CD4-positive, alpha-beta T cell (primary cell): ENCODE measurements at regions of chr18 and their contacts with region 1.

Region 1: GRCh38 chr18:5424903-5425664 is 118.7 kb downstream of the EPB41L3 start:
- DNase-seq: peak in 4 of 14 experiments; percentile 15 to 55 (median 38)
- ATAC-seq: peak; percentile 64
- H3K4me3 ChIP-seq: no peak overlapping the region
- H3K4me3 Mint-ChIP-seq: no peak overlapping the region
- H3K27ac ChIP-seq: no peak overlapping the region
- H3K27ac Mint-ChIP-seq: no peak overlapping the region
- H3K4me1 ChIP-seq: no peaks in the 10 kb centered on the region
- H3K4me1 Mint-ChIP-seq: peaks cover 6% of the 10 kb centered on the region
- H3K27me3 ChIP-seq: no peaks in the 10 kb centered on the region
- H3K27me3 Mint-ChIP-seq: no peaks in the 10 kb centered on the region
- CTCF ChIP-seq: peak; percentile 71

Region 2: GRCh38 chr18:5073026-5073944 is 351.8 kb before region 1 on chr18:
- CTCF ChIA-PET with region 1: no interaction called
- POLR2A ChIA-PET with region 1: no interaction called
- intact Hi-C with region 1: loop called in 1 of 2 experiments (anchors 10 kb)
- DNase-seq: peak in 8 of 14 experiments; percentile 3 to 66 (median 20)
- ATAC-seq: peak; percentile 85
- H3K4me3 ChIP-seq: no peak overlapping the region
- H3K4me3 Mint-ChIP-seq: no peak overlapping the region
- H3K27ac ChIP-seq: no peak overlapping the region
- H3K27ac Mint-ChIP-seq: no peak overlapping the region
- H3K4me1 ChIP-seq: no peaks in the 10 kb centered on the region
- H3K4me1 Mint-ChIP-seq: no peaks in the 10 kb centered on the region
- H3K27me3 ChIP-seq: no peaks in the 10 kb centered on the region
- H3K27me3 Mint-ChIP-seq: peaks cover 4% of the 10 kb centered on the region
- CTCF ChIP-seq: peak; percentile 80

Region 3: DNA sequence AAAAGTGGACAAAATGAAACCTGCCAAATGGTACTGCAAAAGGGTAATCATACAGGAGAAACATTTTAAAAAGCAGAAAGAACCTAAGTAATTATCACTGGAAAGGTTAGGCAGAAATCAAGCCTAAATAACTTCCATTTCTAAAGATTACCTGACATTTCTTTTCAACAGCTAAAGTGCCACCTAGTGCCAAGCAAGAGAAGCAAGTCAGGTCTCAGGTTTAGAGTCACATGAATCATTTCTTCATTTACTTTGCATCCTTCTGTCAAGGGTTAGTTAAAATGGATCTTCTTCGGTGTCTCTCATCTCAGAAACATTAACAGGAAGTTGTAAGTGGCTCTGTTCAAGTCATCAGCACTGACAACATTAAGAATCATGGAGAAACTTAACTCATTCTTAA is 318.4 kb before region 1 on chr18:
- CTCF ChIA-PET with region 1: no interaction called
- POLR2A ChIA-PET with region 1: no interaction called
- intact Hi-C with region 1: loop called in 1 of 2 experiments (anchors 10 kb)
- DNase-seq: peak in 3 of 14 experiments; percentile 3 to 17 (median 16)
- ATAC-seq: peak; percentile 94
- H3K4me3 ChIP-seq: no peak overlapping the region
- H3K4me3 Mint-ChIP-seq: no peak overlapping the region
- H3K27ac ChIP-seq: no peak overlapping the region
- H3K27ac Mint-ChIP-seq: no peak overlapping the region
- H3K4me1 ChIP-seq: no peaks in the 10 kb centered on the region
- H3K4me1 Mint-ChIP-seq: peaks cover 8% of the 10 kb centered on the region
- H3K27me3 ChIP-seq: no peaks in the 10 kb centered on the region
- H3K27me3 Mint-ChIP-seq: no peaks in the 10 kb centered on the region
- CTCF ChIP-seq: peak; percentile 39

Region 4: GRCh38 chr18:5546660-5547059 is 121.6 kb after region 1 on chr18:
- CTCF ChIA-PET with region 1: no interaction called
- POLR2A ChIA-PET with region 1: no interaction called
- intact Hi-C with region 1: loop called in 1 of 2 experiments (anchors 1 kb)
- DNase-seq: peak in 3 of 14 experiments; percentile 6 to 33 (median 31)
- ATAC-seq: peak; percentile 53
- H3K4me3 ChIP-seq: no peak overlapping the region
- H3K4me3 Mint-ChIP-seq: peak overlapping the region; percentile 34
- H3K27ac ChIP-seq: no peak overlapping the region
- H3K27ac Mint-ChIP-seq: no peak overlapping the region
- H3K4me1 ChIP-seq: peaks cover 2% of the 10 kb centered on the region
- H3K4me1 Mint-ChIP-seq: peaks cover 16% of the 10 kb centered on the region
- H3K27me3 ChIP-seq: peaks cover 17 to 37% of the 10 kb centered on the region in 2 experiments
- H3K27me3 Mint-ChIP-seq: peaks cover 51% of the 10 kb centered on the region
- CTCF ChIP-seq: peak; percentile 18

Region 5: DNA sequence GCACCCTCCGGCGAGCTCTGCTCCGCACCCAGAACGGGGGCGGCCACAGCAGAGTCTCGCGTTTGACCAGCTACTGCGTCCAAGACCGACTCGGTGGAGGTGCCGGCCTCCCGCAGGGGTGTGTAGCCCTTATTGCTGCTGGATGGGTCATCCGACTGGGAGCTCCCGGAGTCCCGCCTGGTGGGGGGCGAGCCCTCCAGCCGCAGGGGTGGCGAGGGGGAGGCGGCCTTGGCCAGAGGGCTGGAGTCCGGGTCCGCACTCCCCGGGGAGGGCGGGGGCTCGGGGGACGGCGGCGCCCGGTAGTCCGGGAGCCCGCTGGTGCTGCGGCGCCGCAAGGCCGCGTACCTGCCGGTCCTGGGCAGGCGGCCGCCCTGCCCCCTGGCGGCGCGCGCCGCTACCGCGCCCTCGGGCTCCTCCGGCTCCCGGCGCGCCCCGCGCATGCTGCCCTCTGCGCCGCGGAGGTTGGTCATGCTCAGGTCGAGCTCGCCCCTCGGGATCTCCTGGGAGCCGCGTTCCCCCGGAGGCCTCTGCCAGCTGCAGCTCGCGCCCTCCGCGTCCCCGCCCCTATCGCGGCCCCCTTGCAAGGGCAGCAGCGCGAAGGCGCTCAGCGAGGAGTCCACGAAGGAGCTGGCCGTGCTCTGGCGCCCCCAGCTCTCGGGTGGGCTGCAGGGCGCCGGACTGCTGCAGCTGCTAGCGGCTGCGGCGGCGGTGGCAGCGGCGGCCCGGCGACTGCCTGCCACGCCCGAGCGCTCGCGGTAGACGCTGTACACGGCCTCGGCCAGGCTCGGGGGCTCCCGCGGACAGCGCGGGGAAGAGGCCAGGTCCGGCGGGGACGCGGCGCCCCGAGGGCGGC is 465.5 kb after region 1 on chr18:
- CTCF ChIA-PET with region 1: no interaction called
- POLR2A ChIA-PET with region 1: no interaction called
- intact Hi-C with region 1: loop called in 1 of 2 experiments (anchors 10 kb)
- DNase-seq: peak in 10 of 14 experiments; percentile 1 to 65 (median 30)
- ATAC-seq: peak; percentile 71
- H3K4me3 ChIP-seq: no peak overlapping the region
- H3K4me3 Mint-ChIP-seq: no peak overlapping the region
- H3K27ac ChIP-seq: no peak overlapping the region
- H3K27ac Mint-ChIP-seq: no peak overlapping the region
- H3K4me1 ChIP-seq: peaks cover 5% of the 10 kb centered on the region
- H3K4me1 Mint-ChIP-seq: peaks cover 10% of the 10 kb centered on the region
- H3K27me3 ChIP-seq: peaks cover 37 to 75% of the 10 kb centered on the region in 2 experiments
- H3K27me3 Mint-ChIP-seq: peaks cover 73% of the 10 kb centered on the region
- CTCF ChIP-seq: peak; percentile 13